Activated CD8-positive, alpha-beta T cell treated with anti-CD3 and anti-CD28 coated beads for 36 hours (primary cell): ENCODE measurements at regions of chr10 and their contacts with region 1.

Region 1: DNA sequence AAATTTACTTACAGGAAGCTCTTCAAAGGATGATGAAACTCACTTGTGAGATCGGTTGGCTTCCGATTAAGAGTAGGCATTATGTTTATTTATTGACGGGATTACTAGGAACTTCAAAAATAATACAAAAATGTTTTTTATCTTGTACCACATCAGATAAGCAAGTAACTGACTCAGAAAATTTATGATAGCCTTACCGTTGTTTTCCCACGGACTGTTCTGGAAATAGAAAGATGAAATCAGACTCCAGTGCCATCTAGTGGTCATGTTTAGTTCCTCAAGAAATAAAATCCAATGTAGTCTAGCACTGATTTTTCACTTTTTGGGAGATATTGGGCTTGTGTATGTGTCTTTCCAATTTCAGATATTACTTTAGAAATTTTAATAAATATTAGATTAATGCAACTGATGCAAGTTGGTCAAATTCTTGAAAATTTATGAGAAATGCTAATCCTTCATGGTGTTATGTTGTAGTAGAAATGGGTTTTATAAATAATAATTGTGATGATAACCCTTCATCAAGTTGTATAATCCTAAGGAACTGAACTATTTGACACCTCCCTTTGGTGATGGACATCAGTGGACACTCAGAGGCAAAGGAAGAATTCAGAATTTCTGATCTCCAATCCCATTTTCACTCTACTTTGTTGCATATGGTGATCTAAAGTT is 168.8 kb downstream of the TMEM26 start:
- DNase-seq: no peak
- ATAC-seq: no peak
- H3K4me3 Mint-ChIP-seq: peak overlapping the region; percentile 22
- H3K27ac Mint-ChIP-seq: no peak overlapping the region
- H3K4me1 Mint-ChIP-seq: peaks cover 21% of the 10 kb centered on the region
- H3K27me3 Mint-ChIP-seq: no peaks in the 10 kb centered on the region
- CTCF ChIP-seq: peak; percentile 85

Region 2: GRCh38 chr10:60816628-60817397 is 467.5 kb before region 1 on chr10:
- CTCF ChIA-PET with region 1: no interaction called
- POLR2A ChIA-PET with region 1: no interaction called
- intact Hi-C with region 1: loop called (anchors 5 kb)
- DNase-seq: peak; percentile 33
- ATAC-seq: peak; percentile 85
- H3K4me3 Mint-ChIP-seq: no peak overlapping the region
- H3K27ac Mint-ChIP-seq: no peak overlapping the region
- H3K4me1 Mint-ChIP-seq: no peaks in the 10 kb centered on the region
- H3K27me3 Mint-ChIP-seq: no peaks in the 10 kb centered on the region
- CTCF ChIP-seq: peak; percentile 88

Region 3: GRCh38 chr10:61159253-61159652 is 125.1 kb before region 1 on chr10:
- CTCF ChIA-PET with region 1: no interaction called
- POLR2A ChIA-PET with region 1: no interaction called
- intact Hi-C with region 1: loop called (anchors 10 kb)
- DNase-seq: no peak
- ATAC-seq: no peak
- H3K4me3 Mint-ChIP-seq: no peak overlapping the region
- H3K27ac Mint-ChIP-seq: no peak overlapping the region
- H3K4me1 Mint-ChIP-seq: no peaks in the 10 kb centered on the region
- H3K27me3 Mint-ChIP-seq: no peaks in the 10 kb centered on the region
- CTCF ChIP-seq: no peak